ENCODE measurements at regions of chr11 and their contacts with region 1.

Region 1: DNA sequence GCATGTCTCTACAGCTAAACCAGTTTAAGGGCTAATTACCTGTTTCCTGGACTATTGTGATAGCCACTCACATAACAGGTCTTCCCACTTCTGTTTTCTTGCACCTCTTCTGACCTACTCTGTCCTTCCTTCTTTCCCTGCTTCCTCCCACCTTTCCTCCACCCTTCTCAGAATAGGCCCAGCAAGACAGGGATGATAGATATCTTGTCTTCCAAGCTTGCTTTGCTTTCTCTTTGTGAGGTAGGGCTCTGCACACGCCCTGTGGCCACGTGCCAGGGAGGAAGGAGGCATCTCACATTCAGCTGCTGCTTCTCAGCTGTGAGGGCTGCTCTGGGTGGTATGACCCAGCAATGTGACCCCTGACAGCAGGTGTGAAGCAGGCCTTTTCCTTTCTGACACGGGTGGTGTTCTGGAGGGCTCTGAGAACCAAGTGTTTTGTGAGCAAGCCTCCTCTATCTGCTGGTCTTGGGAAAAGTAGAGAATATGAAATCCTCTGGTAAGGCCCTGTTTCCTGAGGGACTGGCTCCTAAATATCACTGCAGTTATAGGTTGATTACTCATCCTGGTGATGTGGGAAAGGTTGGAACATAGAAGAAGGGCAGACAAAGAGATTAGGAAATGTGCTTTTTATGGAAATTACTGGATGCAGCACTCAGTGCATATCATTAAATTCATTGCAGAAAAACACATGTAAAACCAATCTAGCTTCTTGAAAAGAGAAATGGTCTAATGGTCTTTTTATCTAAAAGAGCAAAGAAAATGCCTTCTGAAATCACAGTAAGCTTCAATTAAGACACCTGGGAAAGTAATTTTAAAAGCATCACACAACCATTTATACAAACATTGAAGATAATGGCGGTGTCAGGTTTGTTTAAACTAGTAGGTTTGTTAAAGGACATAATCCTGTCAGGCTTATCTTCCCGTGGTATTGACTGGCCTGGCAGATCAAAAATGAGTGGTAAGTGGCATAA is 8.5 kb downstream of the AMOTL1 start:
- DNase-seq: peak; percentile 28
- H3K4me3 Mint-ChIP-seq: peak overlapping the region; percentile 5
- H3K27ac Mint-ChIP-seq: peak overlapping the region; percentile 46
- H3K4me1 Mint-ChIP-seq: peaks cover 40% of the 10 kb centered on the region
- H3K27me3 Mint-ChIP-seq: no peaks in the 10 kb centered on the region
- CTCF ChIP-seq: no peak

Region 2: GRCh38 chr11:94553938-94554337 is 222.7 kb before region 1 on chr11:
- CTCF ChIA-PET with region 1: no interaction called
- intact Hi-C with region 1: loop called (anchors 10 kb)
- DNase-seq: no peak
- H3K4me3 Mint-ChIP-seq: no peak overlapping the region
- H3K27ac Mint-ChIP-seq: no peak overlapping the region
- H3K4me1 Mint-ChIP-seq: peaks cover 34% of the 10 kb centered on the region
- H3K27me3 Mint-ChIP-seq: no peaks in the 10 kb centered on the region
- CTCF ChIP-seq: no peak

Region 3: GRCh38 chr11:95254131-95254704 is 477.6 kb after region 1 on chr11:
- CTCF ChIA-PET with region 1: no interaction called
- intact Hi-C with region 1: no loop called
- DNase-seq: peak; percentile 55
- H3K4me3 Mint-ChIP-seq: peak overlapping the region; percentile 59
- H3K27ac Mint-ChIP-seq: no peak overlapping the region
- H3K4me1 Mint-ChIP-seq: no peaks in the 10 kb centered on the region
- H3K27me3 Mint-ChIP-seq: peaks cover 8% of the 10 kb centered on the region
- CTCF ChIP-seq: no peak